Aorta (tissue), 5 donors: ENCODE measurements at regions of chr6 and their contacts with region 1.

Region 1: GRCh38 chr6:72939004-72939403 is 286.3 kb downstream of the KHDC1L start:
- DNase-seq: peak in 1 of 2 donors; percentile 34
- ATAC-seq: no peak
- H3K4me3 ChIP-seq: no peak overlapping the region
- H3K27ac ChIP-seq: peak overlapping the region in 1 of 2 donors; percentile 64
- H3K4me1 ChIP-seq: peaks cover 0 to 4% of the 10 kb centered on the region in 2 donors
- H3K27me3 ChIP-seq: no peaks in the 10 kb centered on the region

Region 2: DNA sequence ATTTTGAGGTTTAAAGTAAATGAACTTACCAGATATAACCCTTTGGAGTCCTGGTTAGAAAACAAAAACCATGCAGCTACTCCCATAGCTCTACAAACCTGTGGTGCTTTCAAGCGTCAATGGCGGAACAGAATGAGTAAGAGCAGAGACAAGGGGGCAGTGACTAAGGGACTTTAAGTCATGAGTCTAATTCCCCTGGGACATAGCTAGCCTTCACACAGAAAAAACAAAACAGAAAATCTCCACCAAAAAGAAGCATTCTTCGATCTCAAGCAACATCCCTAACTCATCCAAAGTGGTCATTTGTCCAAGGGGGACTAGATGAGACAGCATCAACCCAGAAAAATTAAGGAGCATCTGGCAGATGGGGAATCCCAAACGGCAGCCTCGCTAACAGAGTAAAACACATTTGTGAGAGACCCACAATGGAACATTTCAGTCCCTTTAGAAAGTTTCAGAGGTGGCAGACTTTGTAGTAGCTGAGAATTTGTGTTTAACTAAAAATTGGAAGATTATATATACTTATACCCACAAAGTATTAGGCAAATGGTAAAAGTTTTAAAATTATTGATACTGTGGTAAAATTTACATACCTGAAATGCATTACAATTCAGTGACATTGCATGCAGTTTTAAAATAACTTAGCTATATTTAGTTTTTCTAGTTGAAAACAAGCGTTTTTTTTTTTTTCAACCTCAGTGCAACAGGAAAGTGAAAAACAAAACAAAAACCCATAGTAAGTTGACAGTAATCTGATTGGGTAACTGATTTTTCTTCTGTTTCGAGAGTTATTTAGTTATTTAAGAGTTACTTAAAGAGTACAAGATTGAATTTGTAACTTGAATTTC is 249.7 kb before region 1 on chr6:
- intact Hi-C with region 1: no loop called
- DNase-seq: no peak
- ATAC-seq: no peak
- H3K4me3 ChIP-seq: no peak overlapping the region
- H3K27ac ChIP-seq: no peak overlapping the region
- H3K4me1 ChIP-seq: no peaks in the 10 kb centered on the region
- H3K27me3 ChIP-seq: no peaks in the 10 kb centered on the region

Region 3: DNA sequence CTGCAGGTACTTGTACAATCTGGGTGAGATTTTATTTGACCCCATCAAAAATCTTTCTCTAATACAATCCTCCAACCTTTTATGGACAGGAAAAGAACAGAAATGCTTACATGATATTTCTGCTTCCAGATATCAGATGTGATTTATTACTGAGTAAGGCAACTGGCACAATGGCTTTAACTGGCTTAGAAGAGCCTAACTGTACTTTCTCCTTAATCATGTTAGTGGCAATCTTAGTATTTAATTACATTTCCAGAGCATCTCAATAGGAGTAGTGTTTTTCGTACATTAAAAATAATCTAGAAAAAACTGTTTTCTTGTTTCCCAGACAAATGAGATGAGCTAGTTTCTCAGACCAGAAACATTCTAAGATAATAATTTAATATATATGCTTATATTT is 65.6 kb before region 1 on chr6:
- intact Hi-C with region 1: loop called in 1 of 2 experiments (anchors 10 kb)
- DNase-seq: no peak
- ATAC-seq: no peak
- H3K4me3 ChIP-seq: no peak overlapping the region
- H3K27ac ChIP-seq: no peak overlapping the region
- H3K4me1 ChIP-seq: no peaks in the 10 kb centered on the region
- H3K27me3 ChIP-seq: no peaks in the 10 kb centered on the region

Region 4: DNA sequence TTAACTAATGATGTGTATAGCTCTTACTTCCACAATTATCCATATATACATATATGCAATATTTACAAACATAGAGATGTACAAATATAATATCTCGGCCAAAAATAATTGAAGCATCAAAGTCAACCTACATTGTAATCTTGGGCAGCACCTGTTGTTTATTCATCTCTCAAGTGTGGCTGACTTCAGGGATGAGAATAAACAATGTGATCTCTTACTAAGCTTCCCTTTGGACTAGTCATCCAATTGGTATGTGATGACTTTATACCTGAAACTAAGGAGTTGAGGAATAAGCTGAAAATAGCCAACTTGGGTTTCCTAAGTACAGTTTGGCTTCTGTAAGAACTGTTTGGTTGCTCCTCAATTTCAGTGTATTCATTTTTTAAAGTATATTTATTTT is 29.7 kb after region 1 on chr6:
- intact Hi-C with region 1: no loop called
- DNase-seq: no peak
- ATAC-seq: no peak
- H3K4me3 ChIP-seq: no peak overlapping the region
- H3K27ac ChIP-seq: no peak overlapping the region
- H3K4me1 ChIP-seq: peaks cover 0 to 4% of the 10 kb centered on the region in 2 donors
- H3K27me3 ChIP-seq: no peaks in the 10 kb centered on the region